ENCODE measurements at regions of chr1 and their contacts with region 1.

Region 1: DNA sequence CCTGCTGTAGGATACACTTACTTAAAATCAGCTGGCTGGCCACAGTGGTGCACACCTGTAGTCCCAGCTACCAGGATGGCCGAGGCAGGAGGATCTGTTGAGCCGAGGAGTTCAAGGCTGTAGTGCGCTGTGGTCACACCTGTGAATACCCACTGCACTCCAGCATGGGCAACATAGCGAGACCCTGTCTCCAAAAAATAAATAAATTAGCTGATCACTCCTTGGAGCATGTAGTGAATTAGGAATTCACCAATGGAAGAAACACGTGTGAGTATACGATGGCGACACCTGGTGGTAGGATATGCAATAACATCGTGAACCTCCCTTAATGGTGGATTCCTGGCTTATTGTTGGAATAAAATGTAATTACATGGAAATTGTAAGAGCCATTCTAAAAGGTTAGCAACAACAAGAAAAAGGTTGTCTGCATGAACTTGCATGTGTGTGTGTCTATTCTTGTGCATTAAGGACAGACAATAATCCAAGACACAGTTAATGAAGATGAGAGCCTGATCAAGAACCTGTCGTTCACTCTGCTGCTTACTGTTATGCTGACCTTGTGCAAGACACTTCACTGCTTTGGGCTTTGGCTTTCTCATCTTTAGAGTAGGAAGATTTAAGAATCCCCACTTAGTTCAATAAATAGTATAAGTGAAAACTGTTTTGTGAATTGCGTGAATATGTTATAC is 38.6 kb upstream of the COX20 start:
- DNase-seq: peak; percentile 43 to 92 (median 71)
- H3K4me3 ChIP-seq: no peak overlapping the region
- H3K27ac ChIP-seq: no peak overlapping the region
- H3K4me1 ChIP-seq: peaks cover 3 to 6% of the 10 kb centered on the region in 2 donors
- H3K27me3 ChIP-seq: no peaks in the 10 kb centered on the region
- CTCF ChIP-seq: peak; percentile 90 to 96 (median 94)
- POLR2A ChIP-seq: no peak

Region 2: GRCh38 chr1:244599937-244600350 is 196.9 kb before region 1 on chr1:
- intact Hi-C with region 1: loop called (anchors 2 kb)
- DNase-seq: peak; percentile 60 to 78 (median 72)
- H3K4me3 ChIP-seq: peak overlapping the region in 1 of 4 donors; percentile 32
- H3K27ac ChIP-seq: peak overlapping the region in 3 of 5 donors; percentile 62 to 79 (median 73)
- H3K4me1 ChIP-seq: no peaks in the 10 kb centered on the region
- H3K27me3 ChIP-seq: no peaks in the 10 kb centered on the region
- CTCF ChIP-seq: no peak
- POLR2A ChIP-seq: peak in 1 of 2 donors; percentile 86

Region 3: DNA sequence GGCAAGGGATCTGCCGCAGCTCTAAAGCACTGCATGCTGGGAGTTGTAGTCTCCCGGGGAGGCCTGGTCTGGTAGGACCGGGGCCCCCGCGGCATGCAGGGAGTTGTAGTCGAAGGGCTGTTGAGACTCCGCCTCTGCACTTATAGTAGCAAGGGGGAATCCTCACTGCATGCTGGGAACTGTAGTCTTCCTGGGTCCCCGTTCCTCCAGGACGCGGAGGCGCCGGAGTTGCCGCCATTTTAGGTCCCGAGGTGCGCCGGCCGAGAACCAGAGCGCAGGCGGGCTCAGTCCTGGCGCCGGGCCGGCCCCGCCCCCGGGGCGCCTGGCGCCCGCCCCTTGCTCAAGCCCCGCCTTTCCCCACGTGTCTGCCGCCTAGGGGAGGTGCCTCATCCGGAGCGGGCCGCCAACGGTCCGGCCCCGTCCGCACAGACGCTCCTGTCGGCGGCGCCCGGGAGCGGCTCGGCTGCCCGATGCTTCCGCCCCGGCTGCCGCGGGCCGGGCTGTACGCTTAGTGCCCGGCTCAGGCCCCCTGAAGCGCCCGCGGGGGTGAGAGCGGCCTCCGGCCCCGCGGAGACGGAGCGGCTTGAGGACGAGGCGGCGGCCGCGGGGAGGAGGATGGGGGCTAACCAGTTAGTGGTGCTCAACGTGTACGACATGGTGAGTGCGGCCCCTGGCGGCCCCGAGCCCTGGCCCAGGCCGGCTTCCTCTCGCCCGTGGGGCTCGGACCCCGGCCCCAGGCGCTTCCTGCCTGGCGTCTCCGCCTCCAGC is 144.0 kb before region 1 on chr1 and contains the start of gene DESI2:
- intact Hi-C with region 1: loop called in 1 of 2 experiments (anchors 5 kb)
- DNase-seq: peak; percentile 98 to 100 (median 100)
- H3K4me3 ChIP-seq: peak within 1 kb of the TSS; percentile 31 to 99 (median 82)
- H3K27ac ChIP-seq: peak within 1 kb of the TSS; percentile 23 to 92 (median 90)
- H3K4me1 ChIP-seq: peaks cover 9 to 22% of the 10 kb centered on the region in 2 donors
- H3K27me3 ChIP-seq: no peaks in the 10 kb centered on the region
- CTCF ChIP-seq: peak in 5 of 6 experiments; percentile 27 to 58 (median 47)
- POLR2A ChIP-seq: peak; percentile 96 to 98
- total RNA-seq, gene DESI2: 20.6 to 50.0 (median 30.2) TPM